Heart left ventricle (tissue), 16 donors: ENCODE measurements at regions of chr6 and their contacts with region 1.

Region 1: GRCh38 chr6:84220809-84221409 is 6.5 kb downstream of the CEP162 start:
- DNase-seq: no peak
- ATAC-seq: no peak
- H3K4me3 ChIP-seq: no peak overlapping the region
- H3K27ac ChIP-seq: no peak overlapping the region
- H3K4me1 ChIP-seq: no peaks in the 10 kb centered on the region
- H3K27me3 ChIP-seq: no peaks in the 10 kb centered on the region
- CTCF ChIP-seq: peak; percentile 24 to 73 (median 57)
- POLR2A ChIP-seq: no peak

Region 2: GRCh38 chr6:83615025-83615999 is 605.6 kb before region 1 on chr6:
- intact Hi-C with region 1: loop called in 6 of 10 experiments (anchors 5 to 10 kb)
- DNase-seq: no peak
- ATAC-seq: no peak
- H3K4me3 ChIP-seq: no peak overlapping the region
- H3K27ac ChIP-seq: no peak overlapping the region
- H3K4me1 ChIP-seq: no peaks in the 10 kb centered on the region
- H3K27me3 ChIP-seq: no peaks in the 10 kb centered on the region
- CTCF ChIP-seq: peak; percentile 17 to 59 (median 50)
- POLR2A ChIP-seq: no peak

Region 3: DNA sequence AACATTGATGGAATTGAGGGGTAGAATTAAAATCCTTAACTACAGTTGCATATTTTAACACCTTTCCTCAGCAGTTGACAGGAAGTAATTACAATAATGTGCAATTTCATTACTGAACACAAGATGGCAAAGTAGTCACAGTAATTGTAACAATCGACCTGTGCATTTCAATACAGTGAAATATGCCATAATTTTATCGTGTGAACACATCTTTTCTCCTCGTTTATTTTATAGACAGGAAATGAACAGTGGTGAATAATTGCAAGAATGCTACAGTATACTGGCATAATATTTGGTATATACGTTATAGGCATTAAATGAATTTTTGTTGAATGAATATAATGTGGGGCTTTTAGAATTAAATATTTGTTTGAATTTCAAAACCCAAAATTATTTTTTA is 336.4 kb before region 1 on chr6:
- intact Hi-C with region 1: loop called (anchors 2 to 5 kb)
- DNase-seq: no peak
- ATAC-seq: peak in 2 of 4 donors; percentile 46 to 50
- H3K4me3 ChIP-seq: no peak overlapping the region
- H3K27ac ChIP-seq: no peak overlapping the region
- H3K4me1 ChIP-seq: peaks cover 0 to 5% (median 0%) of the 10 kb centered on the region in 12 donors
- H3K27me3 ChIP-seq: no peaks in the 10 kb centered on the region
- CTCF ChIP-seq: peak; percentile 50 to 82 (median 67)
- POLR2A ChIP-seq: no peak

Region 4: GRCh38 chr6:83889621-83890020 is 331.3 kb before region 1 on chr6:
- intact Hi-C with region 1: loop called in 9 of 10 experiments (anchors 2 to 5 kb)
- DNase-seq: no peak
- ATAC-seq: no peak
- H3K4me3 ChIP-seq: no peak overlapping the region
- H3K27ac ChIP-seq: no peak overlapping the region
- H3K4me1 ChIP-seq: peaks cover 0 to 22% (median 0%) of the 10 kb centered on the region in 12 donors
- H3K27me3 ChIP-seq: no peaks in the 10 kb centered on the region
- CTCF ChIP-seq: no peak
- POLR2A ChIP-seq: no peak